ENCODE measurements at regions of chr11 and their contacts with region 1.

Region 1: GRCh38 chr11:84193706-84194105 is 907.5 kb upstream of the CCDC90B start:
- DNase-seq: no peak
- H3K4me3 ChIP-seq: no peak overlapping the region
- H3K27ac ChIP-seq: no peak overlapping the region
- H3K4me1 ChIP-seq: no peaks in the 10 kb centered on the region
- H3K27me3 ChIP-seq: no peaks in the 10 kb centered on the region
- CTCF ChIP-seq: no peak
- POLR2A ChIP-seq: no peak

Region 2: GRCh38 chr11:83881445-83881844 is 312.3 kb before region 1 on chr11:
- intact Hi-C with region 1: loop called (anchors 5 kb)
- DNase-seq: no peak
- H3K4me3 ChIP-seq: no peak overlapping the region
- H3K27ac ChIP-seq: no peak overlapping the region
- H3K4me1 ChIP-seq: no peaks in the 10 kb centered on the region
- H3K27me3 ChIP-seq: no peaks in the 10 kb centered on the region
- CTCF ChIP-seq: no peak
- POLR2A ChIP-seq: no peak

Region 3: DNA sequence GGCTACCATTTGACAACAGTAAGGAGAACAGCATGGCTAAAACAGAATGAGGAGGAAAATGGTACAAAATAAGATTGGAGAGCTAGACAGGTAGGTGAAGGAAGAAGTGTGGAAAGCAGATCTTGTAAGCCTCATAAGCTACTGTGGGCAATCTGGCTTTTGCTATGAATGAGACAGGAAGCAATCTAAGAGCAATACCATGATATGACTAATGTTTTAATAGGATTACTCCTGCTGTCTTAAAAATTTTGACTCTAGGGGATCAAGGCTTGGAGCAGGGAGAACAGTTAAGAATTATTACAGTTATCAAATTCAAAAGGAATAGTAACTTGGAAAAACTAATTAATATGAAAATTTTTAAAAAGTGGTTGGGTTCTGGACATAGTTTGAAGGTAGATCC is 258.5 kb after region 1 on chr11:
- intact Hi-C with region 1: no loop called
- DNase-seq: no peak
- H3K4me3 ChIP-seq: no peak overlapping the region
- H3K27ac ChIP-seq: no peak overlapping the region
- H3K4me1 ChIP-seq: no peaks in the 10 kb centered on the region
- H3K27me3 ChIP-seq: no peaks in the 10 kb centered on the region
- CTCF ChIP-seq: no peak
- POLR2A ChIP-seq: no peak